Activated CD8-positive, alpha-beta memory T cell treated with anti-CD3 and anti-CD28 coated beads, Interleukin-2, amount 10 ng/mL, durations not matched to agents 7 days and 5 days (primary cell): ENCODE measurements at regions of chr11 and their contacts with region 1.

Region 1: GRCh38 chr11:9613118-9613829 is 39.8 kb downstream of the WEE1 start:
- DNase-seq: peak; percentile 93
- ATAC-seq: peak; percentile 75
- H3K4me3 Mint-ChIP-seq: peak overlapping the region; percentile 83
- H3K27ac Mint-ChIP-seq: peak overlapping the region; percentile 98
- H3K4me1 Mint-ChIP-seq: peaks cover 27% of the 10 kb centered on the region
- H3K27me3 Mint-ChIP-seq: no peaks in the 10 kb centered on the region

Region 2: GRCh38 chr11:9534791-9535781 is 78.2 kb before region 1 on chr11:
- CTCF ChIA-PET with region 1: interaction called, 93 read pairs
- DNase-seq: peak; percentile 83
- ATAC-seq: peak; percentile 84
- H3K4me3 Mint-ChIP-seq: no peak overlapping the region
- H3K27ac Mint-ChIP-seq: no peak overlapping the region
- H3K4me1 Mint-ChIP-seq: peaks cover 3% of the 10 kb centered on the region
- H3K27me3 Mint-ChIP-seq: no peaks in the 10 kb centered on the region

Region 3: DNA sequence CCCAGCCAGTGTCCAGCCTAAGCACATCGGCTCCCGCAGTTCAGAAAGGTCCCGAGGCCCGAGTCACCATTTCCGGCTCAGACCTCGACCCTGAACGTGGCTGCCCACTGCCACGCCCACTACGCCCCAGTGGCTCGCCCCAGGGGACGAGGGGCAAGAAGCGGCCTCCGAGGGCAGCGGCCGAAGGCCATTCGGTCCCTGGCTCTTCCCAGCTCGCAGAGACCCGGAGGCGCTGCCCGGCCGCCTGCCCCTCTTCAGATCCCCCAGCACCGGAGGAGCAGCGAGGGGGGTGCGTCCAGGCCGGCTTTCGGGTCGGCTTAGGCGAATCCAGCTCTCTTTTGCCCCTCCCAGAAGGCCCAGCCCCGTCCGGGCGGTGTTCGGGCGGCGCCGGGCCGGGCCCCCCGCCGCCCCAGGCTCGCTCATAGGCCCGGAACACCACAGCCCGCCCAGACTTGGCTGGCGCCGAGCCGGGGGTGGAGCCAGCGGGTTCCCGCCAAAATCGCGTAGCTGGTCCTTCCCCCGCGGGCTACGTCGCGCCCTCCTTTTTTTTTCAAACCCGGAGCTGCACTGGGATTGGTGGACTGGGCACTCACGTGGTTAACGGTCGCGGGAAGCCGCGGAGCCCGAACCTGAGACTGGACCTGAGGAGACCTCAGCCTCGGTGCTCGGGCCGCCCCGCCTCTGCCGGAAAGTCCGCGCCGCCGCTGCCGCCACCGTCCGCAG is 40.1 kb before region 1 on chr11 and contains the start of gene WEE1:
- CTCF ChIA-PET with region 1: interaction called, 78 read pairs
- DNase-seq: peak; percentile 99
- ATAC-seq: peak; percentile 93
- H3K4me3 Mint-ChIP-seq: peak within 1 kb of the TSS; percentile 89
- H3K27ac Mint-ChIP-seq: peak within 1 kb of the TSS; percentile 87
- H3K4me1 Mint-ChIP-seq: peaks cover 34% of the 10 kb centered on the region
- H3K27me3 Mint-ChIP-seq: peaks cover 8% of the 10 kb centered on the region
- total RNA-seq, gene WEE1: 76.8 to 83.3 TPM

Region 4: GRCh38 chr11:9601037-9601875 is 12.0 kb before region 1 on chr11:
- CTCF ChIA-PET with region 1: interaction called, 53 read pairs
- DNase-seq: peak; percentile 93
- ATAC-seq: peak; percentile 83
- H3K4me3 Mint-ChIP-seq: peak overlapping the region; percentile 66
- H3K27ac Mint-ChIP-seq: peak overlapping the region; percentile 85
- H3K4me1 Mint-ChIP-seq: peaks cover 32% of the 10 kb centered on the region
- H3K27me3 Mint-ChIP-seq: peaks cover 18% of the 10 kb centered on the region

Region 5: DNA sequence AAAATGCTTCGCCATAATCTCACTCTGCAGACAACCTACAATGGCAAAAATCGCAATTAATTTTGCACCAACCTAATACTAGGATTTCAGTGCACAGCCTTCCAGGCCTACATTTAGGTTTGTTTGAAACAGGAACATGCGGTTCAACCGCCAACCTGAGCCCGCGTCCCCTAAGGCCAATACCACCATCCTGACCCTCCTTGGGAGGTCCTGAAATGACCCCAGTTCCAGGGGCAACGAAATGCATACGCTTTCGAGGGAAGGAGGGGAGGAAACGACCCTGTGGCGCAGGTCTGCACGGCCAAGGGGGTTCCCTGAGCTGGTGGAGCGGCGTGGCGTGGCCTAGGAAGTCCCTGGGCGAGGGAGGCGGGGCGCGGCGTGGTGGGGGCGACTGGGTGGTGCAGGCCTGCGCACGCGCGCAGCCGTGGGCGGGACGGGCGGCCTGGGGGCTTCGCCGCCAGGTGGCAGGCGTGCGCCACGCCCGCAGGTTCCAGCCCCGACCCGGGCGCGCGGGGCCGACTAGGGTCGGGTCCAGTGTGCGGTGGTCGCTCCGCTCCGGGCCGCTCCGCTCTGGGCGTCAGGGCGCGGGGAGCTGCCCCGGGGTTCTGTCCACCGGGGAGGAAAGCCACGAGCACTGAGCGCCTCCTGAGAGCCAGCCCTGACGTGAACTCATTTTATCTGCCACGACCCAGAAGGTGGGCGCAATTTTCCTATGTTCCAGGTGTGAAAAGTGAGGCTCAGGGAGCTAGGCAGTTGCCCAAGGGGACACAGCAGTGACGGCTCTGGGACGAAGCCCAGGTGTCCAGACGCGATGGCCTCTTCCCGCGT is 144.7 kb after region 1 on chr11:
- CTCF ChIA-PET with region 1: interaction called, 18 read pairs
- DNase-seq: peak; percentile 93
- ATAC-seq: peak; percentile 82
- H3K4me3 Mint-ChIP-seq: peak overlapping the region; percentile 74
- H3K27ac Mint-ChIP-seq: peak overlapping the region; percentile 76
- H3K4me1 Mint-ChIP-seq: peaks cover 45% of the 10 kb centered on the region
- H3K27me3 Mint-ChIP-seq: no peaks in the 10 kb centered on the region